Left ventricle myocardium inferior (tissue), 1 donor: ENCODE measurements at regions of chr10 and their contacts with region 1.

Region 1: DNA sequence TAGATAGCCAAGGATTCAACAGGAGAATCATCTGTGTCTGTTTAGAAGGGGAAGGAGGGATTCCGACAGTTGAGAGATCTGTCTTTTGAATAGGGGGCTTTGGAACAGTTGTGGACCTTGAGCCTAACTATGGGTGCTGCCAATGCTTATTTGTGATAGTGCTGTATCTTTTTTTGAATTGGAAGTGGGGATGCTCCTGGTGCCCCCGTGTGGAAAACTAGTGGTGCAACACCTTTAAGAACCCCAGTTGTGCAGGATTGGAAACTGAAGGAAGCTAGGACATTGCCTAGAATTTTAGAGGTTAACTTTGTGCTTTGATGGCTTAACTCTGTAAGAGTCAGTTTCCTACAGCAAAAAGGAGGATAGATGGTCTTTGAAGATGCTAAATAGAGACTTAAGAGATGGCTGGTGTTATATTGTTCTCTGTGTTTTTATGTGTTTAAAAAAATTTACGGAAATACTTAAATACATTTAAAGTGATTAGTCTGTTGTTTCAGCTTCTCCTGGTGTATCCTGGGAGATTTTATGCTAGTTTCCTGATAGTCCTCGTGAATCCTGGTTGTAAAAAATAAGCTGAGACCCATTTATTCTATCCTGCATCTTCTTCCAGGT is 69.3 kb downstream of the AP3M1 start:
- DNase-seq: no peak
- H3K4me3 ChIP-seq: no peak overlapping the region
- H3K27ac ChIP-seq: peak overlapping the region; percentile 40
- H3K4me1 ChIP-seq: peaks cover 86% of the 10 kb centered on the region
- H3K27me3 ChIP-seq: no peaks in the 10 kb centered on the region
- CTCF ChIP-seq: peak; percentile 82

Region 2: DNA sequence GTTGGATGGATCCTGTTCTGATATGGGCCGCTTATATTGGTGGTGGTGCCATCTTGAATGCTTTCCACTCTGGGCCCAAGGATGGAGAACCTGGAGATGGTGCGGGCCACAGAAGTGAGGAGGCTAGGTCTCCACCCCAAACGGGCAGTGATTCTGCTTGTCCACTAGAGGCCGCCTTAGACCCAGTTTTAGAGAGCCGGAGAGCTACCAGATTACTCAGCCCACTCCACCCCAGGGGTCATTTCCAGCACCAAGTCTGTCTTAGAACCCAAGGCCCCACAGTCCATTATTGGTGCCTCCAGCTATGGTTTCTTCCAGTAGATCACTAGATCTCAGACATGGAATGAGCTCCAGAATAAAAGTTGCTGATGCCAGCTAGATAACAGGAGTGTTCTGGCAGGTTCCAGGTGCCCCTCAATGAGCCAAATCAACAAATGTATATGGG is 195.2 kb before region 1 on chr10:
- intact Hi-C with region 1: loop called (anchors 5 kb)
- DNase-seq: peak; percentile 58
- H3K4me3 ChIP-seq: no peak overlapping the region
- H3K27ac ChIP-seq: peak overlapping the region; percentile 87
- H3K4me1 ChIP-seq: peaks cover 32% of the 10 kb centered on the region
- H3K27me3 ChIP-seq: peaks cover 5% of the 10 kb centered on the region
- CTCF ChIP-seq: peak; percentile 89

Region 3: GRCh38 chr10:74008212-74008731 is 73.0 kb before region 1 on chr10:
- intact Hi-C with region 1: loop called (anchors 10 kb)
- DNase-seq: no peak
- H3K4me3 ChIP-seq: peak overlapping the region; percentile 11
- H3K27ac ChIP-seq: peak overlapping the region; percentile 62
- H3K4me1 ChIP-seq: peaks cover 95% of the 10 kb centered on the region
- H3K27me3 ChIP-seq: no peaks in the 10 kb centered on the region
- CTCF ChIP-seq: no peak

Region 4: DNA sequence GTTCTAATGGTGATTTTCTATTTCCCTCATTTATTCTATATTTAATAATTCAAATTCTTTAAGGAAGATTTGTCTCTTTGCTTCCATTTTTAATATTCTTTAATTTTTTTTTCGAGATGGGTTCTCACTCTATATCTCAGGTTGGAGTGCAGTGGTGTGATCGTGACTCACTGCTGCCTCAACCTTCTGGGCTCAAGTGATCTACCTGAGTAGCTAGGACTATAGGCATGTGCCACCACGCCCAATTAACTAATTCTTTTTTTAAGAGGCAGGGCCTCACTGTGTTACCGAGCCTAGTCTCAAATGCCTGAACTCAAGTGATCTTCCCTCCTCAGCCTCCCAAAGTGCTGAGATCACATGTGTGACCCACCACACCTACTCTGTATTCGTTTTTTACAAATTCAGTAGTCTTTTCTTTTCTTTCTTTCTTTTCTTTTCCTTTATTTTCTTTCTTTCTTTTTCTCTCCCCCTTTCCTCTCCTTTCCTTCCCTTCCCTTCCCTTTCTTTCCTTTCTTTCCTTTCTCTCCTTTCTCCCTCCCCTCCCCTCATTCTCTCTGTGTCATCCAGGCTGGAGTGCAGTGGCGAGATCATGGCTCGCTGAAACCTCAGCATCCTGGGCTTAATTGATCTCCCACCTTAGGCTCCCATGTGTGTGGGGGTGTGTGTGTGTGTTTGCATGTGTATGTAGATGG is 392.9 kb after region 1 on chr10:
- intact Hi-C with region 1: no loop called
- DNase-seq: no peak
- H3K4me3 ChIP-seq: no peak overlapping the region
- H3K27ac ChIP-seq: no peak overlapping the region
- H3K4me1 ChIP-seq: no peaks in the 10 kb centered on the region
- H3K27me3 ChIP-seq: no peaks in the 10 kb centered on the region
- CTCF ChIP-seq: no peak